ENCODE measurements at regions of chr6 and their contacts with region 1.

Region 1: GRCh38 chr6:33276864-33277662 is at the start of gene B3GALT4:
- DNase-seq: peak; percentile 96
- H3K4me3 Mint-ChIP-seq: peak within 1 kb of the TSS; percentile 94
- H3K27ac Mint-ChIP-seq: peak within 1 kb of the TSS; percentile 100
- H3K4me1 Mint-ChIP-seq: peaks cover 60% of the 10 kb centered on the region
- H3K27me3 Mint-ChIP-seq: peaks cover 5% of the 10 kb centered on the region
- CTCF ChIP-seq: peak; percentile 74
- total RNA-seq, gene B3GALT4: 18.2 and 21.6 TPM in 2 replicates

Region 2: GRCh38 chr6:33299237-33299944 is 22.3 kb after region 1 on chr6:
- CTCF ChIA-PET with region 1: interaction called, 14 read pairs
- intact Hi-C with region 1: no loop called
- DNase-seq: peak; percentile 97
- H3K4me3 Mint-ChIP-seq: peak overlapping the region; percentile 90
- H3K27ac Mint-ChIP-seq: peak overlapping the region; percentile 98
- H3K4me1 Mint-ChIP-seq: peaks cover 25% of the 10 kb centered on the region
- H3K27me3 Mint-ChIP-seq: no peaks in the 10 kb centered on the region
- CTCF ChIP-seq: peak; percentile 85

Measured in Calu3 (cell line).